ENCODE measurements at regions of chr4 and their contacts with region 1.

Region 1: GRCh38 chr4:71732706-71733105 is 51.2 kb downstream of the GC start:
- DNase-seq: peak; percentile 9 to 21 (median 16)
- ATAC-seq: no peak
- H3K4me3 ChIP-seq: no peak overlapping the region
- H3K27ac ChIP-seq: no peak overlapping the region
- H3K4me1 ChIP-seq: no peaks in the 10 kb centered on the region
- H3K27me3 ChIP-seq: peaks cover 0 to 9% of the 10 kb centered on the region in 2 experiments; a peak in 2 of 5 replicates
- CTCF ChIP-seq: peak in 2 of 3 experiments; percentile 41 to 66; a peak in 3 of 6 replicates
- EP300 ChIP-seq: no peak
- POLR2A ChIP-seq: no peak
- RAD21 ChIP-seq: peak; percentile 77 to 78

Region 2: DNA sequence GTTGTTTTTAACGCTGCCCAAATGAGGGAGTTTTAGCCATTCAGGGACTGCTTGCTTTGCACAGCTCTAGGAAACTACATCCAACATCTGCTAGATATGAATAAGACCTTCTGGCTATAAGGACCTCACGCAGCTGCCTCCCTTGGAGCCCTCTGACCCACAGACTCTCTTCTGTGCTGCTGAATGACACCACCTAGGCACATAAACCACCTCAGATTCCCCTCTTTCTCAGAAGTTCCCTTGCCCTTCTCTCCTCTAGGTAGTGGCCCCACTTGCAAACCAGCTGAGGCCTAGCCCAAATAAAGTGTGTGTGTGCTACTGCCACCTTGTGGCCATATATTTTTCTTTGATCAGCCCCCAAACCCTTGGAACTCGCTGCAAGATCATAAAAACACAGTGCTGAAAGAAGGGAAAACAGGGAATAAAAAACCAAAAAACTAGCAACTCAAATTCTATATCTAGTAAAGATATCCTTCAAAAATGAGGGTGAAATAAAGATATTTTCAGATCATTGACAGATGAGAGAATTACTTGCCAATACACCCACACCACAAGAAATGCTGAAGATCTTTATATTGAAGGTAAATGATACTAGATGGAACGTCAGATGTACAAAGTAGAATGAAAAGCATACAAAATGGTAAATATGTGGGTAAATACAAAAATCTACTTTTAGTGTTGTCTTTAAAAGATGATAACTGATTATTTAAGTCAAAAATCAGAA is 570.4 kb after region 1 on chr4:
- CTCF ChIA-PET with region 1: no interaction called
- POLR2A ChIA-PET with region 1: no interaction called
- in situ Hi-C with region 1: no loop called
- intact Hi-C with region 1: loop called (anchors 5 kb)
- DNase-seq: peak; percentile 45 to 66 (median 56)
- ATAC-seq: peak; percentile 98
- H3K4me3 ChIP-seq: no peak overlapping the region
- H3K27ac ChIP-seq: no peak overlapping the region
- H3K4me1 ChIP-seq: no peaks in the 10 kb centered on the region
- H3K27me3 ChIP-seq: no peaks in the 10 kb centered on the region
- CTCF ChIP-seq: peak; percentile 61 to 70 (median 63)
- EP300 ChIP-seq: no peak
- POLR2A ChIP-seq: no peak
- RAD21 ChIP-seq: peak; percentile 42 to 48